B cell (primary cell): ENCODE measurements at regions of chr2 and their contacts with region 1.

Region 1: DNA sequence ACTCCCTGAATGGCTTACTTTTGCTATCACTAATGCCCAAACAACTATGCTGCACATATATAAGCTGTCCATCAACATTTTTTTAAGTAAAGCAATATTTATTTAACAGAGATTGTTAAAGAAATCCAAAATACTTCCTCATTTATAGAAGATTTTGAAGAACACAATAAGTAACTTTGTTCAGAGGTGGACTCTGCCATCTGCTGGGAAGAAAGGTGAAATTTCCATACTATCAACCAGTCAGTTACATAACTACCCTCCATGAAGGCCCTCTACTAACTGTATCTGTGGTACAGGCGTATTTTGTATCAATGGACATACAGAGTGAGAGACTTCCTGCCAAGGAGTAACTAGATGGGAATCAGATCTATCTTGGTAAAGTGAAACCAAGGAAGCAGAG is 106.0 kb downstream of the DTNB start:
- DNase-seq: peak; percentile 71
- ATAC-seq: peak; percentile 69
- H3K4me3 ChIP-seq: no peak overlapping the region
- H3K4me3 Mint-ChIP-seq: no peak overlapping the region
- H3K27ac ChIP-seq: peak overlapping the region in 1 of 2 donors; percentile 2
- H3K27ac Mint-ChIP-seq: no peak overlapping the region
- H3K4me1 ChIP-seq: peaks cover 17 to 19% of the 10 kb centered on the region in 2 donors
- H3K4me1 Mint-ChIP-seq: peaks cover 28% of the 10 kb centered on the region
- H3K27me3 ChIP-seq: no peaks in the 10 kb centered on the region
- H3K27me3 Mint-ChIP-seq: no peaks in the 10 kb centered on the region
- CTCF ChIP-seq: peak; percentile 77

Region 2: DNA sequence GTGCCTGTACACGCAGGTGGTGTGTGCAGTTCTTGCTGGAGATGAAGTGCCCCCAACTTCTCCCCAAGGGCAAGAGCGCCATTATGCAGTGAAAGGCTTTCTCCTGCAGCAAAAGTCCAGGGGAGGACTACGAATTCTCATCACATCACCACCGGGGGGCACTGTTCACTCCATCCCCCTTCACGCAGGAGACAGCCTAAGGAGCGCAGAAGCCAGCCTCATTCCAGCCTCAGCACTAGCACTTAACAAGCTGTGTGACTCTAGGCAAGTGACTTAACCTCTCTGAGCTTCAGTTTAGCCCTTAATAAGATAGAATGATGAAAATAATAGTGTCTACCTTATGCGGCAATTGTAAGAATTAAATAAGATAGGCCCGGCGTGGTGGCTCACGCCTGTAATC is 258.0 kb before region 1 on chr2:
- CTCF ChIA-PET with region 1: interaction called, 11 read pairs
- POLR2A ChIA-PET with region 1: no interaction called
- intact Hi-C with region 1: no loop called
- DNase-seq: peak; percentile 75
- ATAC-seq: peak; percentile 63
- H3K4me3 ChIP-seq: no peak overlapping the region
- H3K4me3 Mint-ChIP-seq: no peak overlapping the region
- H3K27ac ChIP-seq: no peak overlapping the region
- H3K27ac Mint-ChIP-seq: no peak overlapping the region
- H3K4me1 ChIP-seq: peaks cover 5% of the 10 kb centered on the region in 2 donors
- H3K4me1 Mint-ChIP-seq: peaks cover 20% of the 10 kb centered on the region
- H3K27me3 ChIP-seq: no peaks in the 10 kb centered on the region
- H3K27me3 Mint-ChIP-seq: no peaks in the 10 kb centered on the region
- CTCF ChIP-seq: peak; percentile 68

Region 3: GRCh38 chr2:26243470-26244308 is 676.3 kb after region 1 on chr2:
- CTCF ChIA-PET with region 1: no interaction called
- POLR2A ChIA-PET with region 1: no interaction called
- intact Hi-C with region 1: no loop called
- DNase-seq: no peak
- ATAC-seq: no peak
- H3K4me3 ChIP-seq: peak overlapping the region; percentile 68 to 100 (median 92)
- H3K4me3 Mint-ChIP-seq: peak overlapping the region; percentile 100
- H3K27ac ChIP-seq: peak overlapping the region; percentile 93 to 99
- H3K27ac Mint-ChIP-seq: peak overlapping the region; percentile 100
- H3K4me1 ChIP-seq: peaks cover 32 to 43% of the 10 kb centered on the region in 2 donors
- H3K4me1 Mint-ChIP-seq: peaks cover 59% of the 10 kb centered on the region
- H3K27me3 ChIP-seq: no peaks in the 10 kb centered on the region
- H3K27me3 Mint-ChIP-seq: no peaks in the 10 kb centered on the region
- CTCF ChIP-seq: no peak